ENCODE measurements at regions of chr5 and their contacts with region 1.

Region 1: DNA sequence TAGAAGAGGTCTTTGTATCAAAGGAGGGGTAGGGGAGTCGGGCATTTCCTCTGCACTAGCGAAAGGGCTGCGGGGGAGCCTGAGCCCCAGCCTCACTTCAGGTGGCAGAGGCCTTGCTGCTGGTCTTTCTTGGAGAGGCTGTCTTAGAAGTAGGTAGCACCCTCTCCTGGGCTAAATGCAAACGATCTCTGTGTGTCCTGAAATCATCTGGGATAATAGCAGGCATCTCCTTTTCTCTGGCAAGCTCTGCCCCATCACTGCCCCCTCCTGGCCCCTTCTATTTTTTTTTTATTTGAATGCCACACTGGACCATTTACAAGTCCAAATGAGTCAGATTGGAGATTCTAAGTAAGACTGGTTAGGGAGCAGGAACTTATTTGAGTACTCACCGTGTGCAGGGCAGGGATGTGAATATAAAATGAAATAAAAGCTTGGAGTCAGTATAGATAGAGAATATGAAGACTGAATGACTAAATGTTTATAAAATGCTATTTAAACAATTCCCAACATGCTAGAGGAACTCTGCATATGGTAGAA is 137.1 kb downstream of the FGF1 start:
- DNase-seq: peak; percentile 97
- H3K4me3 ChIP-seq: no peak overlapping the region
- H3K27ac ChIP-seq: peak overlapping the region; percentile 43
- H3K4me1 ChIP-seq: peaks cover 34% of the 10 kb centered on the region
- H3K27me3 ChIP-seq: no peaks in the 10 kb centered on the region
- CTCF ChIP-seq: peak; percentile 87 to 93
- POLR2A ChIP-seq: no peak

Region 2: GRCh38 chr5:142000703-142001484 is 547.9 kb before region 1 on chr5:
- CTCF ChIA-PET with region 1: no interaction called
- POLR2A ChIA-PET with region 1: interaction called, 5 read pairs
- dilution Hi-C with region 1: no loop called
- intact Hi-C with region 1: loop called (anchors 5 kb)
- DNase-seq: peak; percentile 42
- H3K4me3 ChIP-seq: no peak overlapping the region
- H3K27ac ChIP-seq: no peak overlapping the region
- H3K4me1 ChIP-seq: peaks cover 3% of the 10 kb centered on the region
- H3K27me3 ChIP-seq: no peaks in the 10 kb centered on the region
- CTCF ChIP-seq: peak; percentile 47 to 55
- POLR2A ChIP-seq: no peak

Region 3: GRCh38 chr5:142316051-142316450 is 232.8 kb before region 1 on chr5:
- CTCF ChIA-PET with region 1: interaction called, 128 read pairs
- POLR2A ChIA-PET with region 1: no interaction called
- dilution Hi-C with region 1: no loop called
- intact Hi-C with region 1: loop called (anchors 1 kb)
- DNase-seq: peak; percentile 82
- H3K4me3 ChIP-seq: no peak overlapping the region
- H3K27ac ChIP-seq: peak overlapping the region; percentile 57
- H3K4me1 ChIP-seq: peaks cover 68% of the 10 kb centered on the region
- H3K27me3 ChIP-seq: no peaks in the 10 kb centered on the region
- CTCF ChIP-seq: no peak
- POLR2A ChIP-seq: no peak

Region 4: DNA sequence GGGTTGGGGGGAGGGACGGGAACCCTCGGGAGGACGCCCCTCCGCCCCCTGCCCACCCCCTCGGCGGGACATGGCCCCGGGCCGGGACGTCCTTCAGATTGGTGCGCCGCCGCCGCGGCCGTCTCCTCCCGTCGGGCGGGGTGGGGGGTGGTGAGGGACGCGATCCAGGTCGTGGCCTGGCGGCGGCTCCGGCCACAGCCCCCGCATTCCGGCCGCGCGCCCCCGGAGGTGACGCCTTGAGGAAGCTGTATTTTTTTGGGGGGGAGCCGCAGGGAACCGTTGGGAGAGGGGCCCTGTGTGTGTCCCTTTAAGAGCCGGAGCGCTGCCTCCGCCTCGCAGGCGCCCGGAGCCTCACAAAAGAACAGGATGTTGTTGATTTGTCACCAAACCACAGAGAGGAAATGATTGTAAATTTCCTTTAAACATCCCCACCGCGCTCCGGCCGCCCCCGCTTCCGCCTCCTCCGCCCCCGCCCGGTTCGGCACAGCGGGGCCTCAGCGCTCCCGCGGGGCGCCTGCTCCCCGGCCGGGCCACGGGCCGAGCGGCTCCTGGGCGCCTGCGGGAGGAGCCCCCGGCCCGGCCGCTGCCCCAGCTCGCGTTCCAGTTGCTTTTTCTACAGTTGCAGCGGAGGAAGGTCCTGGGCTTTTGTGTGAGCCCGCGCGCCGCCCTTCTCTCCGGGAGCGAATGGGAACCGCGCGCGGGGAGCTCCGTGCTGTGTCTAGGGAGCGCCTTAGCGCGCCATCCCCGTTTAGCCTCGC is 191.9 kb before region 1 on chr5:
- CTCF ChIA-PET with region 1: interaction called, 27 read pairs
- POLR2A ChIA-PET with region 1: interaction called, 3 read pairs
- dilution Hi-C with region 1: no loop called
- intact Hi-C with region 1: loop called (anchors 1 kb)
- DNase-seq: peak; percentile 94
- H3K4me3 ChIP-seq: peak overlapping the region in 1 of 3 experiments; percentile 54
- H3K27ac ChIP-seq: peak overlapping the region; percentile 74
- H3K4me1 ChIP-seq: peaks cover 31% of the 10 kb centered on the region
- H3K27me3 ChIP-seq: no peaks in the 10 kb centered on the region
- CTCF ChIP-seq: no peak
- POLR2A ChIP-seq: peak; percentile 47

Region 5: GRCh38 chr5:142446131-142446959 is 102.5 kb before region 1 on chr5:
- CTCF ChIA-PET with region 1: interaction called, 4 read pairs
- POLR2A ChIA-PET with region 1: no interaction called
- dilution Hi-C with region 1: no loop called
- intact Hi-C with region 1: loop called (anchors 5 kb)
- DNase-seq: peak; percentile 67
- H3K4me3 ChIP-seq: peak overlapping the region in 1 of 3 experiments; percentile 5
- H3K27ac ChIP-seq: peak overlapping the region; percentile 88
- H3K4me1 ChIP-seq: peaks cover 20% of the 10 kb centered on the region
- H3K27me3 ChIP-seq: no peaks in the 10 kb centered on the region
- CTCF ChIP-seq: no peak
- POLR2A ChIP-seq: peak; percentile 64

Region 6: GRCh38 chr5:142466195-142466971 is 82.4 kb before region 1 on chr5:
- CTCF ChIA-PET with region 1: no interaction called
- POLR2A ChIA-PET with region 1: no interaction called
- dilution Hi-C with region 1: no loop called
- intact Hi-C with region 1: no loop called
- DNase-seq: peak; percentile 34
- H3K4me3 ChIP-seq: no peak overlapping the region
- H3K27ac ChIP-seq: peak overlapping the region; percentile 13
- H3K4me1 ChIP-seq: peaks cover 11% of the 10 kb centered on the region
- H3K27me3 ChIP-seq: no peaks in the 10 kb centered on the region
- CTCF ChIP-seq: no peak
- POLR2A ChIP-seq: no peak

Region 7: GRCh38 chr5:142611154-142611553 is 62.3 kb after region 1 on chr5:
- CTCF ChIA-PET with region 1: no interaction called
- POLR2A ChIA-PET with region 1: no interaction called
- dilution Hi-C with region 1: no loop called
- intact Hi-C with region 1: no loop called
- DNase-seq: peak; percentile 74
- H3K4me3 ChIP-seq: no peak overlapping the region
- H3K27ac ChIP-seq: no peak overlapping the region
- H3K4me1 ChIP-seq: no peaks in the 10 kb centered on the region
- H3K27me3 ChIP-seq: peaks cover 2 to 27% of the 10 kb centered on the region in 2 experiments
- CTCF ChIP-seq: peak; percentile 87 to 90
- POLR2A ChIP-seq: no peak

Region 8: GRCh38 chr5:142699184-142699720 is 150.4 kb after region 1 on chr5:
- CTCF ChIA-PET with region 1: interaction called, 32 read pairs
- POLR2A ChIA-PET with region 1: no interaction called
- dilution Hi-C with region 1: no loop called
- intact Hi-C with region 1: loop called (anchors 1 kb)
- DNase-seq: peak; percentile 83
- H3K4me3 ChIP-seq: no peak overlapping the region
- H3K27ac ChIP-seq: no peak overlapping the region
- H3K4me1 ChIP-seq: no peaks in the 10 kb centered on the region
- H3K27me3 ChIP-seq: peaks cover 0 to 6% of the 10 kb centered on the region in 2 experiments
- CTCF ChIP-seq: peak; percentile 91 to 93
- POLR2A ChIP-seq: no peak